Left lung (tissue), 14 donors: ENCODE measurements at regions of chr2 and their contacts with region 1.

Region 1: DNA sequence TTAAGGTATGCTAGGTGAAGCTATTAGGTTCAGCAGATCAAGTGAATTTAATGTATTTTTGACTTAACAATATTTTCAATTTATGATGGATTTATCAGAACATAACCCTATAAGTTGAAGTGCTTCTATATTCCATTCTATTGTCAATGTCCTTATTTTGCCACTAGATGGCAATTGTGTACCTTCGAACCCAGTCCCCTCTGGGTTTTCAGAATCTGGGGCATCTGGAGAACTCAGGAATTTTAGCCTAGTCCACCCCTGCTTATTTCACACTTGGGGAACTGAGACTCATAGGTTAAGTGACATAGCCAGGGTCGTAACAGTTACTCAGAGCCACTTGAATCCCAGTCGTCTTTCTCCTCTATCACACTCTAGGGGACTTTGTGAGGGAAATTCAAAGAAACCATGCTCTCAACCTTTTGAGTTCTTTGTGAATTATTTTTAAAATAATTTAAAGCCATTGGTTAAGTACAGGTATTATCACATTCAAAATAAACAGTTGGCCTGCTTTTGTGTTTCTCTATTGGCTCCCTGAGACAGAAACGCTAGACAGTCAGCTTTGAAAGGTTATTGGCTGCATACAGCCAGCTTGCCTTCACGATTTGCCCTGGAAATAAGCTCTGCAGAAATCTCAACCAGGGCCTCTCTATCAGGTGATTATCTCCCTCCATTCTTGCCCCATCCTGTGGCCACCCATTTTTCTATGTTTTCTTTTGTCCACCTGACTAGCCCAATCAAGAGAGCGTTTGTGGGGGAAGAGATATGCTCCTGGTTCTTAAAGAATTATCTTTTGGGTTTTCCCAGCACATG is 145.0 kb downstream of the TTC27 start:
- DNase-seq: peak in 2 of 4 donors; percentile 39 to 58
- ATAC-seq: peak; percentile 79
- H3K4me3 ChIP-seq: no peak overlapping the region
- H3K27ac ChIP-seq: no peak overlapping the region
- H3K4me1 ChIP-seq: no peaks in the 10 kb centered on the region
- H3K27me3 ChIP-seq: no peaks in the 10 kb centered on the region
- CTCF ChIP-seq: peak; percentile 41 to 71

Region 2: GRCh38 chr2:33022989-33023727 is 250.3 kb after region 1 on chr2:
- intact Hi-C with region 1: loop called in 1 of 2 experiments (anchors 10 kb)
- DNase-seq: no peak
- ATAC-seq: peak; percentile 25
- H3K4me3 ChIP-seq: no peak overlapping the region
- H3K27ac ChIP-seq: no peak overlapping the region
- H3K4me1 ChIP-seq: peaks cover 0 to 7% of the 10 kb centered on the region in 2 donors
- H3K27me3 ChIP-seq: no peaks in the 10 kb centered on the region
- CTCF ChIP-seq: no peak